ENCODE measurements at regions of chr19 and their contacts with region 1.

Region 1: DNA sequence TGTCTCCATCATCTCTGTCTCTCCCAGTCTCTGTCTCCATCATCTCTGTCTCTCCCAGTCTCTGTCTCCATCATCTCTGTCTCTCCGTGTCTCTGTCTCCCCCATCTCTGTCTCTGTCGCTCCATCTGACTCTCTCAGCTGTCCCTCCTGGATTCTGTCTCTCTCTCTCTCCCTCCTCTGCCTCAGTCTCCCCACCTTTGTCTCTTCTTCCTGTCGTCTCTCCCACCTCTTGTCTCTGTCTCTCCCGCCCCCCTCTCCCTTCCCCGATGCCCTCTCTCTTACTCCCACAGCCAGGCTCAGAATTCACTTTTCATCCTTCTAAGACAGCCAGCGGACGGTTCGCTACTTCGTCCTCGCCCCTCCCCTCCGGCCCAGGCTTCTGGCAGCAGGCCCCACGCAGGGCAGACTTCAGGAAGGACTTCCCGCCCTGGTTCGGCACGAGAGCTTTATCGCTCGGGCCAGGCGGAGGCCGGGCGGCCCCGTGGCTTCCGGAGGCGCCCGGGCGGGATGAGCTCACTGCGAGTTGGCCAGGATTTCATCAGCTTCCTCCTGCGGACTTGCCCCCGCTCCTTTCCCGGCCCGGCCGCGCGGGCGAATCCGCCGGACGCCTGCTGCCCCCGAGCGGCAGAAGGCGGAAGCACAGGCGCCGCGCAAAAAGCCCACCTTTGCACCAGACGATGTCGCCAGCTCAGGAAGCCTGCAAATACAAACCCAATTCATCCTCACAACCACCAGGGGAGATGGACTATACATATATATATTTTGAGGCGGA is 12.4 kb upstream of the CCDC9 start:
- DNase-seq: peak; percentile 92
- H3K4me3 Mint-ChIP-seq: peak overlapping the region; percentile 84
- H3K27ac Mint-ChIP-seq: peak overlapping the region; percentile 89
- H3K4me1 Mint-ChIP-seq: peaks cover 16% of the 10 kb centered on the region
- H3K27me3 Mint-ChIP-seq: peaks cover 3% of the 10 kb centered on the region

Region 2: GRCh38 chr19:47094557-47095475 is 149.1 kb before region 1 on chr19:
- intact Hi-C with region 1: loop called (anchors 5 kb)
- DNase-seq: peak; percentile 52
- H3K4me3 Mint-ChIP-seq: peak overlapping the region; percentile 95
- H3K27ac Mint-ChIP-seq: peak overlapping the region; percentile 100
- H3K4me1 Mint-ChIP-seq: peaks cover 62% of the 10 kb centered on the region
- H3K27me3 Mint-ChIP-seq: no peaks in the 10 kb centered on the region

Region 3: GRCh38 chr19:47157431-47158321 is 86.3 kb before region 1 on chr19:
- intact Hi-C with region 1: loop called (anchors 2 kb)
- DNase-seq: no peak
- H3K4me3 Mint-ChIP-seq: peak overlapping the region; percentile 31
- H3K27ac Mint-ChIP-seq: peak overlapping the region; percentile 90
- H3K4me1 Mint-ChIP-seq: peaks cover 43% of the 10 kb centered on the region
- H3K27me3 Mint-ChIP-seq: no peaks in the 10 kb centered on the region

Region 4: DNA sequence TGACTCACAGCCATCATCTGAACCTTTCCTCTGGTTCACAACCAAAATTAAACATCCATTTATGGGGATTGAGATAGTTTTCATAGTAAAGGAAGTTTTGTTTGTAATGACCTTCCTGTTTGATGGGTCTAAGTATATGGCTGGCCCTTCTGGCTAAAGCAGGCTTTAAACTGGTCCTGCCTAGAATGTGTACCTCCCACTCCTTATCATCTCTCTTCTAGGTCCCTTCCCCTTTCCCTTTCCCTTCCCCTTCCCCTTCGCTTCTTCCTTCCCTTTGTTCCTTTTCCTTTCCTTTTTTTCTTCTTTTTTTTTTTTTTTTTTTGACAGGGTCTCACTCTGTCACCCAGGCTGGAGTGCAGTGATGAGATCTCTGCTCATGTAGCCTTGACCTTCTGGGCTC is 48.5 kb before region 1 on chr19:
- intact Hi-C with region 1: no loop called
- DNase-seq: no peak
- H3K4me3 Mint-ChIP-seq: no peak overlapping the region
- H3K27ac Mint-ChIP-seq: peak overlapping the region; percentile 12
- H3K4me1 Mint-ChIP-seq: peaks cover 20% of the 10 kb centered on the region
- H3K27me3 Mint-ChIP-seq: no peaks in the 10 kb centered on the region

Region 5: GRCh38 chr19:47225746-47226425 is 18.1 kb before region 1 on chr19:
- intact Hi-C with region 1: loop called (anchors 1 kb)
- DNase-seq: peak; percentile 84
- H3K4me3 Mint-ChIP-seq: peak overlapping the region; percentile 34
- H3K27ac Mint-ChIP-seq: peak overlapping the region; percentile 67
- H3K4me1 Mint-ChIP-seq: peaks cover 7% of the 10 kb centered on the region
- H3K27me3 Mint-ChIP-seq: no peaks in the 10 kb centered on the region

Region 6: GRCh38 chr19:47391510-47392223 is 147.7 kb after region 1 on chr19:
- intact Hi-C with region 1: no loop called
- DNase-seq: peak; percentile 70
- H3K4me3 Mint-ChIP-seq: no peak overlapping the region
- H3K27ac Mint-ChIP-seq: no peak overlapping the region
- H3K4me1 Mint-ChIP-seq: no peaks in the 10 kb centered on the region
- H3K27me3 Mint-ChIP-seq: peaks cover 5% of the 10 kb centered on the region

Region 7: DNA sequence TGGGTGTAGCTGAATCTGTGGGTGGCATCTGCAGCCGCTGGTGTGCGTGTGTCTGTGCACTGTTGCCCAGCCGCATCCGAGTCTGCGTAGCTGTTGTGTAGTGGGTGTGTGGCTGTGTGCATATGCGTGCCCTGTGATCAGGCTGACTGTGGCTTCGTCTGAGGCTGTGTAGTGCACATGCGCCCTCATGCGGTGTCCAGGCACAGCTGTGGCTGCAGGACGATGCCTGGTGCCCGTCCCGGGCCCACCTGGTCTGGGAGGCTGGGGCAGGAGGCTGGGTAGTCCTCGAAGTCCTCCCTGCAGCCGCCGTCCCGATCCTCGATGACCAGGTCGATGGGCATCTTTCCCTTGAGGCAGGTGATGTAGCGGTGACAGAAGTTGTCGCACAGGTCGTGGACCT is 170.5 kb after region 1 on chr19:
- intact Hi-C with region 1: no loop called
- DNase-seq: no peak
- H3K4me3 Mint-ChIP-seq: no peak overlapping the region
- H3K27ac Mint-ChIP-seq: no peak overlapping the region
- H3K4me1 Mint-ChIP-seq: peaks cover 3% of the 10 kb centered on the region
- H3K27me3 Mint-ChIP-seq: peaks cover 40% of the 10 kb centered on the region

Measured in activated T-helper 2 cell treated with anti-CD3 and anti-CD28 coated beads, Interferon-gamma antibody, Interleukin-2, Interleukin-4, amounts not matched to agents 10 μg/mL and 5 μg/mL and 100 μg/mL, durations not matched to agents 14 hours and 24 hours and 36 hours (primary cell).